ENCODE measurements at regions of chr10 and their contacts with region 1.

Region 1: GRCh38 chr10:60964257-60965235 is 20.6 kb upstream of the RHOBTB1 start:
- DNase-seq: peak; percentile 57
- ATAC-seq: peak; percentile 94

Region 2: DNA sequence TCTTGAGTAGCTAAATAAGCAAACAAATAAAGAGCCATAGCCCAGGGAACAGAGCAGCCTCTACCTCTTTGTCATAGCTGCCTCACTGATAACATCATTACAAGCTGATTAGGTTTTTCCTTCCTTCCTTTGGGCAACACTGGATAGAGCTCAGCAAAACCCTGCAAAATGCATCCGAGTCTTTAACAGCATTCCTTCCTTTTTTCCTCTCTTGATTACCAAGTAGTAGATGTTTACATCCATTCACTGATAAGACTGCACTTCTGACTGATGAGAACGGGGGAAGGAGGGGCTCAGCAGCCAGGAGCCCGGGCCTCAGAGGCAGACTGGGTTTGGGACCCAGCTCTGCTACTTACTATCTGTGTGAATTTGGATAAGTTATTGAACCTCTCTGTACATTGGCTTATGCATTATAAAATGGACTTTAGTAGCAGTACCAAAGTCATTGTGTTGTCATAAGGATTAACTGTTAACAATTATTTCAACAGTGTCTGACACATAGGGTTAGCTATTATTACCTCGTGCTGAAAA is 789.0 kb before region 1 on chr10:
- intact Hi-C with region 1: no loop called
- DNase-seq: no peak
- ATAC-seq: no peak

Region 3: GRCh38 chr10:60816628-60817397 is 147.7 kb before region 1 on chr10:
- intact Hi-C with region 1: loop called (anchors 2 kb)
- DNase-seq: no peak
- ATAC-seq: peak; percentile 93

Region 4: DNA sequence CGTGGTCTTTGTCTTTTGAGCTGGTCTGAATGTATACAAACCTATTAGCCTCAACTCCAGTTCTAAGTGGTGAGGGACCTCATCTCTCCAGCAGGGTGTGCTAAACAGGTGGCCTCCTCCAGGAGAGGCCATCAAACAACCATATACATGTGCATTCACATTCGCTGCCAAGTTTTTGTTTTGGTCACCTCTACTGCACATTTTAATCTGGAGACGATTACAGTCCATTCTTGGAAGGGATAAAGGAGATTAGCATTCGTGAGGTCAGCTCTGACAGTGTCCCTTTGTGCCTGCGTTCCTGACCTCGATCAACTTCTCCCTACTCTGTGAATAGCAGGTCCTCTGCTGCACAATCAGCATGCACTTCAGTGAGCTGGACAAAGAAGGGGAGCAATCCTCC is 81.4 kb before region 1 on chr10:
- intact Hi-C with region 1: loop called (anchors 5 kb)
- DNase-seq: no peak
- ATAC-seq: peak; percentile 92

Measured in left ventricle myocardium superior (tissue), 1 donor.